ENCODE measurements at regions of chr22 and their contacts with region 1.

Region 1: DNA sequence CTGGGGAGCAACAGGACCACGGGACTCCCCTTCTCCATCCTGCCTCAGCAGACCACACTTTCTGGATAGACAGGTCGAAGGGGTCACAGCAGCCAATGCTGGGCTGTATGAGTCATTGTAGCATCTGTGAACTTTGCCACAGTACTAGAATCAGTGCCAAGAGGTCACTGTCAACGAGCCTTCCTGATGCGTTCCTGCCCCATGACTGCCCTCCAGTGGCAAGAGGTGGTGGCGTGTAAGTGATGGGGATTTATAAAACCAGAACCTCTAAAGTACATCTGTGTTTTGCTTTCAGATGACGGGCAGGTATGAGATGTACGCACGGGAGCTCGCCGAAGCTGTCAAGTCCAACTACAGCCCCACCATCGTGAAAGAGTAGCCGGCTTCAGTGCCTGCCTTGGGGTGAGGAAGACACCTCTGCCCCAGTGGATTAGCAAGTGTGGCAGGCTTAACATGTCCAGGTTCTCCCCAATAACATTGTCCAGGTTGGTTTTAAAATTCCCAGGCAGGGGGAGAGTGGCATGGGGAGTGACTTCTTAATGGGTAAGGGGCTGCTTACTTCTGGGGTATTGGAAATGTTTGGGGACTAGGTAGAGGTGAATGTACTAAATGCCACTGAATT is 29.4 kb downstream of the GUCD1 start:
- DNase-seq: peak; percentile 75 to 76
- ATAC-seq: peak; percentile 71 to 87 (median 79)
- H3K4me3 ChIP-seq: no peak overlapping the region
- H3K27ac ChIP-seq: no peak overlapping the region
- H3K4me1 ChIP-seq: peaks cover 3 to 24% (median 16%) of the 10 kb centered on the region in 9 donors
- H3K27me3 ChIP-seq: no peaks in the 10 kb centered on the region
- CTCF ChIP-seq: peak; percentile 76 to 89 (median 87)

Region 2: DNA sequence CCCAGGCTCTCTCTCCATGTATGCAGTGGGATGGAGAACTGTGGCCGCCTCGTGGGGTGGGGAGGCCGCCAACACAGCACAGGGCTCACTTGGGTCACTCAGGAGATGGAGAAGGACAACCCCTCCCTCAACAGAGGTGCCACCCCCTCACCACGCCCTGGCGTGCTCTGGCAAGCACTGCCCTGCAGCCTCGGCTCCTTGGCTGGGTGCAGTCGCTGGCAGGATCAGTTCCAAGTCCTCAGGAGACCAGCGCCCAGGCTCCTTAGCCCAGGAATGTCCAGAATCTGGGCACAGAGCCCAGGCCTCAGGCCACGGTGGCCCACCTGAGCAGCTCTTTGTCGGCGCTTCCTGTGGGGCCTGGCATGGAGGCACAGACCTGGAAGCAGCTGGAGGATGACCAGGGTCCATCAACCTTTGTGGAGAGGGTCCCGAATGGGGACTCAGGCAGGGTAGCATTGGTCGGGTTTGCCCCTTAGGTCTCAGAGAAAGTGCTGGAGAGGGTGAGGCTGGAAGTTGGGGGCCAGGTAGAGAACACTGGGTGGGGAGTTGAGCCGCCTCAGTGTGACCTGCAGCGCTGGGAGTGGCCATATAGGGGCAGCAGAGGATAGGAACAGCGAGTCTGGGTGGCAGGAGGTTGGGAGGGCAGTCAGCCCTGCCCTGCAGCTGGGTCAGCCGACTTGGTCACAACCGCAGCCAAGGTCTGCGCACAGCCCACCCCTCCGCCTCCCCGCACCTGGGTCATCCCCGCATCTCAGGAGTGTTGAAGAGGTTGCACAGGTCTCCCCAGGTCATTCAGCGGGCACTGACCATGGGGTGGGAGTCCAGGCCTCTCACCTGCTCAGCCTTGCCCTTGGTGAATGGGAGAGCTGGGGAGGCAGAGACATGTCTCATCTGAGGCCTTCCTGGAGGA is 336.0 kb before region 1 on chr22:
- intact Hi-C with region 1: loop called in 2 of 10 experiments (anchors 10 kb)
- DNase-seq: peak; percentile 73 to 76
- ATAC-seq: peak; percentile 83 to 95 (median 88)
- H3K4me3 ChIP-seq: no peak overlapping the region
- H3K27ac ChIP-seq: peak overlapping the region in 2 of 10 donors; percentile 1 to 36
- H3K4me1 ChIP-seq: peaks cover 0 to 17% (median 12%) of the 10 kb centered on the region in 9 donors
- H3K27me3 ChIP-seq: no peaks in the 10 kb centered on the region
- CTCF ChIP-seq: peak; percentile 87 to 95 (median 91)

Region 3: DNA sequence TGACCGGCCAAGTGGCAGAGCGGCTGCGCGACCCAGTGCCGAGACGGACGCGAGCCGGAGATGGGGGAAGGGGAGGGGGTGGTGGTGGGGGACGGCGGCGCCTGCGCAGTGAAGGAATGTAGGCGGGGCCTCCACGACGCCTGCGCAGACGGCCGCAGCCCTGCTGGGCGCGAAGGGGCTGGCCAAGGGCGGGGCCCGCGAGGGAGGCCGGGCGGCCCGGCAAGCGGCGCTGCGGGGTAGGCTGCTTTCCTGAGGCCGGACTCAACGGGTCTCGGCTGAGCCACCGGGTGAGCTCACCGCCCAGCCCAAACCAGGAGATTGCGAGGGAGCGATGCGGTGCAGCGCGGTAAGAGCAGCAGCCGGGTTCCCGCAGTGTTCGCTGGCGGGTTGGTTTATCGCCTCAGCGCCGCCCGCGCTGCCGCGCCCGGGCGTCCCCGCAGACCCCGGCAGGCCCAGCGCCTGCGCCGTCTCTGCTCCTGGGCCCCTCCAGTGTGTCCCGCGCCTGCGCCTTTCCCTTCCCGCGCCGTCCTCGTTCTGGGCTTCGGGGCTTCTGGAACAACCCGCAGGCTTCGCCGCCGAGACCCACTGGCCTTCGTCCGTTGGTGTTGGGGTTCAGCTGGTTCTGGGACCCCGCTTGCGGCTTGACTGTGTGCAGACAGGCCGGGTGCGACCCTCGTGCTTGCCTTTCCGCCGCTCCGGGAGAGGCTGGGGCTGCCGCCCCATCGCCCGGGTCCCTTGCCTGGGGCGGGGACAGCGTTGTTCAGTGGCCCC is 254.7 kb before region 1 on chr22 and contains the start of gene SPECC1L:
- intact Hi-C with region 1: loop called in 1 of 10 experiments (anchors 5 kb)
- DNase-seq: peak; percentile 94 to 95
- ATAC-seq: peak; percentile 96 to 99 (median 98)
- H3K4me3 ChIP-seq: peak within 1 kb of the TSS; percentile 62 to 95 (median 87)
- H3K27ac ChIP-seq: peak within 1 kb of the TSS; percentile 76 to 97 (median 96)
- H3K4me1 ChIP-seq: peaks cover 7 to 44% (median 36%) of the 10 kb centered on the region in 9 donors
- H3K27me3 ChIP-seq: no peaks in the 10 kb centered on the region
- CTCF ChIP-seq: peak in 6 of 9 donors; percentile 37 to 72 (median 47)
- total RNA-seq, gene SPECC1L: 34.4 to 61.7 (median 51.8) TPM

Region 4: DNA sequence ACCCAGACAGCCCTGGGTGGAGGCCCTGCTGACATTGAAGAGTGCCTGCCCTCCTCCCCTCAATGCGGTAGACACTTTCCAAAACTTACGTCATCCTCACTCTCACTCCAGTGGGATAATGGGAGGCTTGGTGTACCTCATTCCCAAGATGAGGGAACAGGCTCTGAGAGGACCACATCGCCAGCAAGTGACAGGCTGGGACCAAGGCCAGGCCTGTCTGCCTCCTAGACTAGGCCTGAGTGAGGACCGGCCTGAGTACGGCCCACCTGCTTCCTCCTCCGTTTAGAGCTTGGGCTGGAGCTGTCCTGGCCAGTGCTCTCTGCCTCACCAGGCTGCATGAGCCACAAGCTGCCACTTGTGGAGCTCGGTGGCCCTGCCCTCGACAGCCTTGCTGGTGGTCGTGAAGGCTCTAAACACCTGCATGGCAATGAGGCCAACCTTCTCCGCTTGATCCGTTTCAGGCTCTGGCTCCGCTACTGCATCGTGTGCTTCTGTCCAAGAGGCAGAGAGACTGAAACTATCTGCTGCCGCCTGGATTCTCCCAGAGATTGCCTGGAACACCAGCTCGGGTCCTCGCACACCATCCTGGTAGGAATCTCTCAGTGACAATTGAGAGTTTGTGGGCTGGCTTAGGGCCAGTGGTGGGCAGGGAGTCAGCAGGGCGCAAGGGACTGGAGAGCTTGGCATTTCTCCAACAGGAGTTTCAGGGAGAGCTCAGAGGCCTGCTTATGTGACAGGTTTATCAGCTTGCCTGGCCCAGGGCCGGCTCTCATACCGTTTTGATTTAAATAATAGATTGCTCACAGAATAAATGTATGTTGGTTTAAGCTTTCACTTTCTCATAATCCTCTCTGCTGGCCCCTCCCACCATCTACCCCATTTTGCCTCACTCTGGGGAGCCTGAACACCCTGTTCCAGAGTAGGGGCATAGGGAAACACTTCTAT is 58.0 kb after region 1 on chr22:
- intact Hi-C with region 1: no loop called
- DNase-seq: peak in 1 of 2 donors; percentile 40
- ATAC-seq: peak; percentile 28 to 61 (median 50)
- H3K4me3 ChIP-seq: peak overlapping the region in 4 of 10 donors; percentile 2 to 20 (median 10)
- H3K27ac ChIP-seq: peak overlapping the region in 9 of 10 donors; percentile 2 to 70 (median 35)
- H3K4me1 ChIP-seq: peaks cover 0 to 19% (median 12%) of the 10 kb centered on the region in 9 donors
- H3K27me3 ChIP-seq: no peaks in the 10 kb centered on the region
- CTCF ChIP-seq: no peak

Measured in heart right ventricle (tissue), 16 donors.